ENCODE measurements at regions of chr2 and their contacts with region 1.

Region 1: GRCh38 chr2:37414470-37414949 is 70.1 kb downstream of the QPCT start:
- DNase-seq: peak; percentile 70
- CTCF ChIP-seq: peak; percentile 66

Region 2: DNA sequence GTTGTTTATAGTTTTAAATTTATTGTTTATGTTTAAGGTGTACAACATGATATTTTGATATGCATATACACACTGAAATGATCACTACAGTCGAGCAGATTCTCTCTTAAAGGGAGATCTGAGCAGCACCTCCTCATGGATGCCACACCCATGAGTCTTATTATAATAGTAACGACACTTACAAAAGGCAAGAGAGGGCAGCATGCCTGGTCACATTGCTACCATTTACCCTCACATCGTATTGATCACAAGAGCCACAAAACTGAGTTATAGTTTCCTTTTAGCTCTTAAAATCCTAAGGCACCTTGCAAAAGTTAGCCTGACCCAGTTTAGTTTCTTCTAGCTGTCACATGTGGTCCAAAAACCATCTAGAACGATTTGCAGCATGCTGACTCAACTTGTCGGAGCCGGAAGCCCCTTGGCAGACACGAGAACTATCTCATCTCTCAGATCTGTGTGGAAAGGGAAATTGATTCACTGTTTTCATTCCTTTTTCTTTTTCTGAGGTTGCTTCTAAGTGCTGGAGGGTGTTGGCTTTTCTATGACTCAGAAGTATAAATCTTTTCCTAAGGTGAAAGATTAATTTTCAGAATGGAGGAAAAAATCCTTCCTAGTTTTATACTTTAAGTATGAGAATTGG is 171.6 kb after region 1 on chr2:
- in situ Hi-C with region 1: no loop called
- DNase-seq: no peak
- CTCF ChIP-seq: no peak

Region 3: DNA sequence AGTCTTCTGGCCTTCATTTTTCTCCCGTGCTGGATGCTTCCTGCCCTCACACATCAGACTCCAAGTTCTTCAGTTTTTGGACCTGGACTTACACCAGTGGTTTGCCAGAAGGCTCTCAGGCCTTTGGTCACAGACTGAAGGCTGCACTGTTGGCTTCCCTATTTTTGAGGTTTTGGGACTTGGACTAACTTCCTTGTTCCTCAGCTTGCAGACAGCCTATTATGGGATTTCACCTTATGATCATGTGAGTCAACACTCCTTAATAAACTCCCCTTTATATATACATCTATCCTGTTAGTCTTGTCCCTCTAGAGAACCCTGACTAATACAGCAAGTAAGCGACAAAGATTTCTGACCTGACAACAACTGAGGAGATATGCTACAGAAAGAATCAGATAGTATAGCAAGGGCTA is 249.7 kb after region 1 on chr2:
- in situ Hi-C with region 1: loop called (anchors 10 kb)
- DNase-seq: no peak
- CTCF ChIP-seq: no peak

Region 4: DNA sequence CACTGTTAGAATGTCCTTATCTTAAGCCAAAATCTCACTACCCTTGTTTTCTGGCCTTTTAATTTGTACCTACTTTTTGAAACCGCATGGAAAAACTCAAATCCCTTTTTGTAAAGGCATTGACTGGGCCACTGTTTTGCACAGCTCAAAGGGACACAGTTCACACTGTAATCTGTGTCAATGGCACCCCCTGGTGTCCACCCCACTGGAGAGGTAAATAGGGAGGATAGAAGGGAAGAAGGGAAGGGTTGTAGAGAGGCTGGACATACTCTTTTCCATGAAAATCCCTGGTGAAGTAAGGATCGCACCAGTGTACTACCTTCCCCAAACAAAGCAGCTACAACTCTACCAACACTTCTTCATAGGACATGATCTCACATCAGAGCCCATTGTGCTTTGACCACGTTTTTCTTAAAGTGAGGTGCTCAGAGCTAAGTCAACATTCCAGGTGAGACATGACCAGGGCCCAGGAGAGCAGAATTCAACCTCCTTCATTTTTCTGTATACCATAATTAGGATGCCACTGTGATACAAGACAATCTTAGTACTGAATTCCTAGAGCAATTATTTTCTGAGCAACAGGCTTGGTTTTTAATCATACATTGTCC is 418.2 kb after region 1 on chr2:
- in situ Hi-C with region 1: loop called (anchors 5 kb)
- DNase-seq: peak; percentile 68
- CTCF ChIP-seq: peak; percentile 78